Cardiac septum (tissue), 1 donor: ENCODE measurements at regions of chr21 and their contacts with region 1.

Region 1: GRCh38 chr21:39313571-39314142 is at the start of gene BRWD1:
- DNase-seq: peak; percentile 89
- total RNA-seq, gene BRWD1: 38.9 TPM

Region 2: GRCh38 chr21:38661197-38661871 is 652.3 kb before region 1 on chr21:
- intact Hi-C with region 1: no loop called
- DNase-seq: peak; percentile 79

Region 3: GRCh38 chr21:39349211-39350093 is 35.8 kb after region 1 on chr21:
- intact Hi-C with region 1: loop called (anchors 2 kb)
- DNase-seq: peak; percentile 98

Region 4: DNA sequence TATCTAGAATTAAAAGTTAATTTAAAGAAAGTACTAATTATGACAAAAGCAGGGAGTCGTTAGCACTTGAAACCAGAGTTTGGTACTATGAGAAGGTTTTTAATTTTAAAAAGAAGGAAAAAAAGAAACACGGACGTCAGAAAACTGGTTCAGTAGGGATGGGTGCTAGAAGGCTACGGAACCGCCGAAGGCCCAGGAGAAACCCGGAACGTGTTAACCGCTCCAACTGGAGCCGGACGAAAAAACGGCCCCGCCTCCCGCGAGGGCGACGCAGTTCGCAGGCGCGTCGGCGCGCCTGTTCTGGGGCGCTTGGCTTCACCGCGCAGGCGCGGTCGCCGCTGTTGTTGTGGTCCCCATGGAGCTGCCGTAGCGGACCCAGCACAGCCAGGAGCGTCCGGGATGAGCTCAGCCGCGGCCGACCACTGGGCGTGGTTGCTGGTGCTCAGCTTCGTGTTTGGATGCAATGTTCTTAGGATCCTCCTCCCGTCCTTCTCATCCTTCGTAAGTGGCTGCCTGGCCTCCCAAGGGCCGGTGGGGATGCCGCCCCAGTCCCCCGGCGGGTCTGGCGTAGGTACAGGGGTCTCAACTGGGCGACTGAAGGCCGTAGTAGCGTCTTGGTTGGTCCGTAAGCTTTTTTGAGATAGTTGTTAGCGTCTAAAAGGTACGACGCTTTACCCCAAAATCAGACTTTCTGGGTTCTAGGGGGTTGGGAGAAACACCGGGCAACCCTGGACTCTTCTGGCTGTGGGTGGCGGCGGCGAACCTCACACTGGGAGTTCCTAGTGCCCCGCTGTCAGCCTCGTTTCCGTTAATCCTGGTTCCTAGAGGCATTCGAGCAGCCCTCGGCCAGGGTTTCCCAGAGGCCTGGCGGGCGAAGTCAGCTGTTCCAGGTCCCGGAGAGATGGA is 66.6 kb after region 1 on chr21:
- intact Hi-C with region 1: loop called (anchors 2 kb)
- DNase-seq: peak; percentile 98

Region 5: GRCh38 chr21:39388038-39388810 is 74.6 kb after region 1 on chr21:
- intact Hi-C with region 1: loop called (anchors 1 kb)
- DNase-seq: peak; percentile 96

Region 6: DNA sequence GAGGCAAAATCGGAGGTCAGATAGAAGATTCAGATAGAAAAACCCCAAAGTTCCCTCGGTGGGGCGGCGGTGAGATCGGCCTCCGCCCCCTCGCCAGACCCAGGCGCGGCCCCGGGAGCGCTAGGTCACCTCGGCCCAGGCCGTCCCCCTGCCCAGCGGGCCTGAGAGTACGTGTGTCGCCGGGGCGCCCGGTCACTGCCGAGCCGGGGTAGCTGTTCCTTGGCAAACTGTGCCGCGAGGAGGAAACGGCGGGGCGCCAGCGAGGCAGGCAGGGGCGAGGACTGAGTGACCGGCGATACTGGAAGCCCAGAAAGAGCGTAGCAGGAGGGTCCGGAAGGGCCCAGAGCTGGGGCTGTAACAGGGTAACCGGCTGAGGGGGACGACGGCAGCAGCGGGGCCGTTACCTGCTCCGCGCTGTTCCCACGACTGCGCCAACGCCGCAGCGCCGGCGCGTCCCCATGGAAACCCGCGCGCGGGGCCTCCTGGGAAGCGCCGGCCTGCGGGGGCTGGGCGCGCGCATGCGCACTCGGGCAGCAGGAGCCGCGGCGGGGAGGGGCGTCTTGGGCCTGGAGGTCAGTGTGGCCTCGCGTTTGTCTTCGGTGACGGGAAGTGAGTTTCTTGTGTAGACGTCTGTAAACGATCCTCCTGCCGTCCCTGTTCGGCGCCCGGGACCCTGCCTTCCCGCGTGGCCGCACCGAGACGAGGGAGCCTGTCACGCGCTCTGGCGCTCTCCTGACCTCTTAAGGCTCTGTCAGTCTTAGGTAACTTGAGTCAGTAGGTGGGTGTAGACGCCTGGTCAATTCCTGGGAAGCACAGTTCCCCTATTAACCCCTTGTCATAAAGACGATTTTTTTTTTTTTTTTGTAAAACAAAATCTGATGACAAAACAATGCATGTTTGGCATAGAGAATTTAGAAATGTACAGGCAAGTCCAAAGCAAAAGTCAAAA is 131.9 kb after region 1 on chr21 and contains the start of gene LCA5L:
- intact Hi-C with region 1: loop called (anchors 2 kb)
- DNase-seq: peak; percentile 94
- total RNA-seq, gene LCA5L: 1.7 TPM

Region 7: GRCh38 chr21:39461419-39461818 is 147.8 kb after region 1 on chr21:
- intact Hi-C with region 1: no loop called
- DNase-seq: no peak